Activated B cell treated with CpG ODN at 0.5 μM for 24 hours (primary cell): ENCODE measurements at regions of chr7 and their contacts with region 1.

Region 1: DNA sequence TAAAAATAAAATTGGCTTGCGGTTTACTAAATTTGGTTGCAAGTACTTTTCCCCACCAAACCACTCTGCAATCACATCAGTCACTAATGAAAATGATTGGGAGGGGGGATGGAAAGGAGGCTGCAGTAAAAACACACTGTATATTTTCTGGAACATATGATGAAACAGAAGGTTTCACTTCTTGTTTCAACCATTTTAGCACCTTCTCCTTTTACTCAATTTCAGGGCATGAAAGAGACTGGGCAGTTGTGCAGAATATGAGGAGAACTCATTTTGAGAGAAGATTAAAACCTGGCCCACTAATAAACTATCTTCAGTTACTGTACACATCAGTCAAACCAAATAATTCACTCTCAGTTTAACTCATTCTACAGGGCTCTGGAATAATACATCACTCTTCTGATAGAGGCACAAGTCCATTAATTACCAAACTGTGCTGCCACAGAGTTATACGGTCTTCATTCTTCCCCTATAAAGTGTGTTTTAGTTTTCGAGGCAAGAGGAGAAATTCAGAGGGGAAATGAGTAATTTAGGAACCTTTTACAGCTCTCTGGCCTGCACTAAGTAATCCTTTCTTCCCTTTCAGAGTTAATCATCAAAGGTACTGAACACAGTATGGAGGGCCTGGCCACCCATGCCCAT is 25.5 kb downstream of the JAZF1 start:
- DNase-seq: no peak
- ATAC-seq: peak; percentile 68
- H3K4me3 Mint-ChIP-seq: peak overlapping the region; percentile 68
- H3K27ac Mint-ChIP-seq: peak overlapping the region; percentile 94
- H3K4me1 Mint-ChIP-seq: peaks cover 95% of the 10 kb centered on the region
- H3K27me3 Mint-ChIP-seq: no peaks in the 10 kb centered on the region
- CTCF ChIP-seq: no peak

Region 2: DNA sequence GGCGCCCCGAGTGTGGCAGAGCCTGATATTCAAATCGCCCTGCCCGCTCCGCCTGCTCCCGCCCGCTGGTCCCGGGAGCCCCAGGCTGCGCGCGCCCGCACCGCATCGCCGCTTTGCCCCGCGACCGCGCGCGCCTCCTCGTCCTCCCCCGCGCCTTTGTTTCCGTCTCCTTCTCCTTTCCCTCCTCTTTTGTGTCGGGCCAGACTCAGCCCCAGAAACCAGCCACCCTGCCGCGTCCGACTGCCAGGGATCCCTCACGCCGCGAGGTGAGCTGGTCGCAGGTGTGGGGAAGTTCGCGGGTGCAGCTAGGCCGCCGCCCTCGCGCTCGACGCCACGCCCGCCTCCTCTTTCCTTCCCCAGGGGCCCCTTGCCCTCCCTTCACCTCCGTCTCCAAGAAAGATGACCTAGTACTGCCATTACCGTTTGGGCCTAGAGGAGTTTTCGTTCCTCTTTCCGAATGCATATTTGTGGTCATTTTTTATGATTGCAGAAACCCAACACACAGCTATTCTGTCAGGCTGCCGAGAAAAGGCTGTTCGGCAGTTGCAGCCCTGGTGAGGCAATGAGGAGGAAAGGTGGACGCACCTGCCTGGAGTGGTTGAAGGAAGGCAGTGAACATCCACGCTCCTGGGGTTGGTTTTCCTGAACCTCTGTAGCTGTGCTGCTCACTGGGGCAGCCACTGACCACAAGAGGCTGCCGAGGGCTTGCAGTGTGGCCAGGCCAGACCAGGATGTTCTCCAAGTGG is 1756.2 kb before region 1 on chr7:
- CTCF ChIA-PET with region 1: no interaction called
- POLR2A ChIA-PET with region 1: no interaction called
- intact Hi-C with region 1: loop called (anchors 2 kb)
- DNase-seq: peak; percentile 83
- ATAC-seq: peak; percentile 89
- H3K4me3 Mint-ChIP-seq: peak overlapping the region; percentile 98
- H3K27ac Mint-ChIP-seq: peak overlapping the region; percentile 98
- H3K4me1 Mint-ChIP-seq: peaks cover 36% of the 10 kb centered on the region
- H3K27me3 Mint-ChIP-seq: no peaks in the 10 kb centered on the region
- CTCF ChIP-seq: no peak

Region 3: GRCh38 chr7:28132959-28133870 is 21.9 kb before region 1 on chr7:
- CTCF ChIA-PET with region 1: no interaction called
- POLR2A ChIA-PET with region 1: interaction called, 4 read pairs
- intact Hi-C with region 1: loop called (anchors 2 kb)
- DNase-seq: no peak
- ATAC-seq: peak; percentile 74
- H3K4me3 Mint-ChIP-seq: no peak overlapping the region
- H3K27ac Mint-ChIP-seq: peak overlapping the region; percentile 25
- H3K4me1 Mint-ChIP-seq: peaks cover 57% of the 10 kb centered on the region
- H3K27me3 Mint-ChIP-seq: no peaks in the 10 kb centered on the region
- CTCF ChIP-seq: no peak

Region 4: GRCh38 chr7:28165961-28166955 is 11.1 kb after region 1 on chr7:
- CTCF ChIA-PET with region 1: interaction called, 4 read pairs
- POLR2A ChIA-PET with region 1: interaction called, 81 read pairs
- intact Hi-C with region 1: loop called (anchors 1 kb)
- DNase-seq: no peak
- ATAC-seq: no peak
- H3K4me3 Mint-ChIP-seq: peak overlapping the region; percentile 59
- H3K27ac Mint-ChIP-seq: peak overlapping the region; percentile 85
- H3K4me1 Mint-ChIP-seq: peaks cover 95% of the 10 kb centered on the region
- H3K27me3 Mint-ChIP-seq: no peaks in the 10 kb centered on the region
- CTCF ChIP-seq: no peak

Region 5: GRCh38 chr7:28202222-28202621 is 47.1 kb after region 1 on chr7:
- CTCF ChIA-PET with region 1: interaction called, 3 read pairs
- POLR2A ChIA-PET with region 1: interaction called, 10 read pairs
- intact Hi-C with region 1: loop called (anchors 1 kb)
- DNase-seq: no peak
- ATAC-seq: peak; percentile 57
- H3K4me3 Mint-ChIP-seq: peak overlapping the region; percentile 28
- H3K27ac Mint-ChIP-seq: peak overlapping the region; percentile 24
- H3K4me1 Mint-ChIP-seq: peaks cover 64% of the 10 kb centered on the region
- H3K27me3 Mint-ChIP-seq: no peaks in the 10 kb centered on the region
- CTCF ChIP-seq: no peak

Region 6: DNA sequence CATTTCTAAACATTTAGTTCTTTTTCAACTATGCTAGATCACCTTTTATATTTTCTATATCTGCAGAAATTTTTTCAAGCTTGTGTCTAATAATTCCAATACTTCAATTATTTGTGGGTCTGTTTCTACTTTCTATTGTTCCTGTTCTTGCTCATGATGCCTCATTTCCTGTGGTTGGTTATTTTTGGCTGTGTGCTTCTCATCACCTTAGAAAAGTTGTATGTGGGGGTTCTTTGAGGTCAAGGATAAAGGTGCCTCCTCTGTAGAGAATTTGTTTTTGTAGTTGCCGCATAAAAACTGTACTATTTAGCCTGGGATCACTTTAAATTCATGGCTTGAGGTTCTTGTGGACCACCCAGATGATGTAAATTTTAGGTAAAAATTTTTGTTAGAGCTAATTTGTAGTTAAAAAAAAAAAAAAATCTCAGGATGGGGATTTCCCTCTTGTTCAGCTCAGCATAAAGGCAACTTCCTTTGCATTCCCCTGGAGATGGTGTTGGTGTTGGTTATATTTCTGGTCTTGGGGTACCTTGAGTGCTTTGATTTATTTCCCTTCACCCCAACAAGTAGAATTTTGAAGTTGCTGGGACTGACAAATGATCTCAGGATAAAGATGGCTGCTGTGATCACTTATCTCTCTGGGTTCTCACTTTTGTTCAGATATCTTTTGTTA is 52.5 kb after region 1 on chr7:
- CTCF ChIA-PET with region 1: interaction called, 3 read pairs
- POLR2A ChIA-PET with region 1: interaction called, 10 read pairs
- intact Hi-C with region 1: loop called (anchors 1 kb)
- DNase-seq: no peak
- ATAC-seq: peak; percentile 78
- H3K4me3 Mint-ChIP-seq: peak overlapping the region; percentile 66
- H3K27ac Mint-ChIP-seq: peak overlapping the region; percentile 88
- H3K4me1 Mint-ChIP-seq: peaks cover 81% of the 10 kb centered on the region
- H3K27me3 Mint-ChIP-seq: no peaks in the 10 kb centered on the region
- CTCF ChIP-seq: no peak